ENCODE measurements at regions of chr12 and their contacts with region 1.

Region 1: GRCh38 chr12:111313833-111314259 is 55.0 kb downstream of the PHETA1 start:
- DNase-seq: peak; percentile 47 to 74 (median 62)
- ATAC-seq: peak; percentile 76
- H3K4me3 ChIP-seq: no peak overlapping the region
- H3K4me3 Mint-ChIP-seq: peak overlapping the region in 1 of 10 donors; percentile 63
- H3K27ac ChIP-seq: no peak overlapping the region
- H3K27ac Mint-ChIP-seq: peak overlapping the region in 2 of 9 donors; percentile 13 to 71
- H3K4me1 ChIP-seq: peaks cover 0 to 7% of the 10 kb centered on the region in 2 donors
- H3K4me1 Mint-ChIP-seq: peaks cover 5 to 16% (median 14%) of the 10 kb centered on the region in 7 donors
- H3K27me3 ChIP-seq: no peaks in the 10 kb centered on the region
- H3K27me3 Mint-ChIP-seq: peaks cover 4 to 17% (median 4%) of the 10 kb centered on the region in 5 donors

Region 2: GRCh38 chr12:110893956-110894355 is 419.9 kb before region 1 on chr12:
- CTCF ChIA-PET with region 1: no interaction called
- POLR2A ChIA-PET with region 1: no interaction called
- intact Hi-C with region 1: loop called (anchors 1 kb)
- DNase-seq: no peak
- ATAC-seq: no peak
- H3K4me3 ChIP-seq: no peak overlapping the region
- H3K4me3 Mint-ChIP-seq: peak overlapping the region in 6 of 10 donors; percentile 17 to 74 (median 50)
- H3K27ac ChIP-seq: no peak overlapping the region
- H3K27ac Mint-ChIP-seq: peak overlapping the region in 1 of 9 donors; percentile 67
- H3K4me1 ChIP-seq: no peaks in the 10 kb centered on the region
- H3K4me1 Mint-ChIP-seq: peaks cover 0 to 6% (median 0%) of the 10 kb centered on the region in 7 donors
- H3K27me3 ChIP-seq: no peaks in the 10 kb centered on the region
- H3K27me3 Mint-ChIP-seq: peaks cover 0 to 26% (median 4%) of the 10 kb centered on the region in 5 donors

Region 3: DNA sequence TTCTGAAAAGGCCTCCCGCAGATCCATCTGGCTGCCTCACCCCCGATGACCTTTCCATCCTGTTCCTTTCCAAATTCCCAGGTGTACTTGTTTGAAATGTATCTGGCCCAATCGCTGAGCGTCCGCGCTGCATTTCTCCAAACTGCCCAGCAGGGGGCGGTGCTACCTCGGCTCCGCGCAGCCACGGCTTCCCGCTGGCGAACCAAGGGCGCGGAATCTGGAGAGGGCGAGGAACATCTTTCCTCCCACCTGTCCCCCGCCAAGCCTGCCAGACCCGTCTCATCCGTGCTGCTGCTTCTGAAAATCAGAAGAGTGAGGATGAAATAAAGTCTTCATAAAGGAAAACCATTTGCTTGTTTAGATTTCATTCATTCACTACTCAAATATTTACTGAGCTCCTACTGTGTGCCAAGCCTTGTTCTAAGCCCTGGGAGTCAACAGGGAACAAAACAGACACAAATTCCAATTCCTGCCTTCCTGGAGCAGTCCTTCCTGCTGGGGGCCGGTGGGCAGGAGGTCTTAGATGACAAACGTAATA is 376.7 kb before region 1 on chr12:
- CTCF ChIA-PET with region 1: interaction called, 3 read pairs
- POLR2A ChIA-PET with region 1: no interaction called
- intact Hi-C with region 1: loop called (anchors 1 kb)
- DNase-seq: peak; percentile 22 to 67 (median 51)
- ATAC-seq: peak; percentile 72
- H3K4me3 ChIP-seq: no peak overlapping the region
- H3K4me3 Mint-ChIP-seq: peak overlapping the region in 5 of 10 donors; percentile 7 to 61 (median 31)
- H3K27ac ChIP-seq: no peak overlapping the region
- H3K27ac Mint-ChIP-seq: no peak overlapping the region
- H3K4me1 ChIP-seq: peaks cover 0 to 5% of the 10 kb centered on the region in 2 donors
- H3K4me1 Mint-ChIP-seq: peaks cover 0 to 7% (median 6%) of the 10 kb centered on the region in 7 donors
- H3K27me3 ChIP-seq: no peaks in the 10 kb centered on the region
- H3K27me3 Mint-ChIP-seq: peaks cover 7 to 22% (median 13%) of the 10 kb centered on the region in 5 donors

Region 4: DNA sequence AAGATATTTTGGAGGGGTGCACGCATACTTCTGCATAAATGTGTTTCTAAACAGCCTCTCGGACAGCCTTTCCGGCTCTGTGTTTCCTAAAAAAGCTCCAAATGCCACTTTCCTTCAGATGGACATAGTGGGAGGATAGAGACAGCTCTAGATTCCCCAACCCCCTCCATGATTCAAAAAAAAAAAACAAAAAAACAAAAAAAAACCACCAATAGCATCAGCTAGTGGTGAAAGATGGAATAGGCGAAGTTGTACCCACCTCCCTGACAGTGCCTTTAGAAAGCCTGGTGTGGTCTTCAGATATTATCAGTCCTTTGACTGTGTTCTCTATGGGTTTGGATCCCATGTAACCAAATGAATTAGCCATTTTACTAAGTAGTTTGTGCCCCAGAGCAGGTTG is 39.1 kb before region 1 on chr12:
- CTCF ChIA-PET with region 1: interaction called, 3 read pairs
- POLR2A ChIA-PET with region 1: no interaction called
- intact Hi-C with region 1: loop called in 1 of 2 experiments (anchors 1 kb)
- DNase-seq: no peak
- ATAC-seq: no peak
- H3K4me3 ChIP-seq: no peak overlapping the region
- H3K4me3 Mint-ChIP-seq: no peak overlapping the region
- H3K27ac ChIP-seq: no peak overlapping the region
- H3K27ac Mint-ChIP-seq: no peak overlapping the region
- H3K4me1 ChIP-seq: no peaks in the 10 kb centered on the region
- H3K4me1 Mint-ChIP-seq: peaks cover 0 to 5% (median 0%) of the 10 kb centered on the region in 7 donors
- H3K27me3 ChIP-seq: peaks cover 0 to 3% of the 10 kb centered on the region in 2 donors
- H3K27me3 Mint-ChIP-seq: peaks cover 0 to 14% (median 8%) of the 10 kb centered on the region in 5 donors

Measured in naive thymus-derived CD4-positive, alpha-beta T cell (primary cell).